ENCODE measurements at regions of chr22 and their contacts with region 1.

Region 1: GRCh38 chr22:36123673-36124630 is 36.6 kb downstream of the APOL3 start:
- DNase-seq: peak; percentile 87 to 94 (median 92)
- ATAC-seq: peak; percentile 100
- H3K4me3 ChIP-seq: peak overlapping the region; percentile 45
- H3K4me3 Mint-ChIP-seq: peak overlapping the region; percentile 68 to 89 (median 84)
- H3K27ac ChIP-seq: peak overlapping the region; percentile 63
- H3K27ac Mint-ChIP-seq: peak overlapping the region; percentile 87 to 96 (median 93)
- H3K4me1 ChIP-seq: no peaks in the 10 kb centered on the region
- H3K4me1 Mint-ChIP-seq: peaks cover 8 to 13% (median 11%) of the 10 kb centered on the region in 7 donors
- H3K27me3 ChIP-seq: no peaks in the 10 kb centered on the region
- H3K27me3 Mint-ChIP-seq: peaks cover 0 to 10% (median 0%) of the 10 kb centered on the region in 5 donors

Region 2: DNA sequence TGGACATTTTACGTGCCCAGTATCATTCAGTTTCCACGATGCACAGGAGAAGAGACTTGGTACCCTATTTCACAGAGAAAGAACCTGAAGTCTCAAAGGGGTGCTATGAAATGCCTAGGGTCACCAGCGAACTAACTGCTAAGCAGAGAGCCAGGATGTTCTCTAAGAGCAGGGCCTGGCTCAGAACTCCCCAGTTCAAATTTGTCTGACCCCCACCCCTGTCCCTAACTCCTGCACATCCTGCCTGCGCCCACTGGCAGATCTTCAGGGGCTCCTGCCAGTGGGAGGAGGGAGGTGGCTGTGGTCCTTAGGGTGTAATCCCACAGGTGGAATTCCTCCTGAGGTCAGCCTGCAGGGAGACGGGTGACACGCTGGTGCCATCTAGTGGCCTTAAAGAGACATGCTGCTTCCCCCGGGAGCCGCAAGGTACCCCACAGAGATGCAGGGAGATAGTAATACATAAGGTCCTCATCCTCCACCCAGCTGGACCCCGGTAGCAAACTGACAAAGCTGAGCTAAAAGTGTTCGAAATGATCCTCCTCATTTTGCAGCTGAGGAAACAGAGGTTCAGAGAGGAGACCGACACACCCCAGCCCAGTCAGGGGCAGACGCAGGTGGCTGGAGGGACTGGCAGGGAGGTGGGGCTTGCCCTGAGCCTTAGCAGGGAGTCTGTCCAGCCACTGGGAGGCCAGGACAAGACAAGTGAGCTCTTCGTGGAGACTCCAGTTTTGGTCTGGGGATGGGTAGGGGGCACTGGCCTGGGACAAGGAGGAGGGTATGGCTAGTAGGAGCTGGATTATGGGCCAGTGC is 540.9 kb before region 1 on chr22:
- CTCF ChIA-PET with region 1: no interaction called
- POLR2A ChIA-PET with region 1: no interaction called
- intact Hi-C with region 1: loop called in 1 of 2 experiments (anchors 2 kb)
- DNase-seq: peak; percentile 22 to 70 (median 40)
- ATAC-seq: peak; percentile 82
- H3K4me3 ChIP-seq: no peak overlapping the region
- H3K4me3 Mint-ChIP-seq: no peak overlapping the region
- H3K27ac ChIP-seq: no peak overlapping the region
- H3K27ac Mint-ChIP-seq: no peak overlapping the region
- H3K4me1 ChIP-seq: no peaks in the 10 kb centered on the region
- H3K4me1 Mint-ChIP-seq: peaks cover 0 to 6% (median 0%) of the 10 kb centered on the region in 7 donors
- H3K27me3 ChIP-seq: no peaks in the 10 kb centered on the region
- H3K27me3 Mint-ChIP-seq: peaks cover 0 to 7% (median 0%) of the 10 kb centered on the region in 5 donors

Region 3: GRCh38 chr22:35627264-35628041 is 496.5 kb before region 1 on chr22:
- CTCF ChIA-PET with region 1: interaction called, 9 read pairs
- POLR2A ChIA-PET with region 1: no interaction called
- intact Hi-C with region 1: loop called (anchors 1 kb)
- DNase-seq: peak in 5 of 9 donors; percentile 14 to 49 (median 34)
- ATAC-seq: peak; percentile 42
- H3K4me3 ChIP-seq: peak overlapping the region; percentile 55
- H3K4me3 Mint-ChIP-seq: peak overlapping the region; percentile 53 to 86 (median 73)
- H3K27ac ChIP-seq: no peak overlapping the region
- H3K27ac Mint-ChIP-seq: peak overlapping the region in 7 of 9 donors; percentile 28 to 93 (median 64)
- H3K4me1 ChIP-seq: peaks cover 0 to 10% of the 10 kb centered on the region in 2 donors
- H3K4me1 Mint-ChIP-seq: peaks cover 8 to 30% (median 28%) of the 10 kb centered on the region in 7 donors
- H3K27me3 ChIP-seq: no peaks in the 10 kb centered on the region
- H3K27me3 Mint-ChIP-seq: peaks cover 0 to 14% (median 8%) of the 10 kb centered on the region in 5 donors

Region 4: GRCh38 chr22:35921777-35922176 is 202.2 kb before region 1 on chr22:
- CTCF ChIA-PET with region 1: no interaction called
- POLR2A ChIA-PET with region 1: no interaction called
- intact Hi-C with region 1: loop called (anchors 5 kb)
- DNase-seq: peak in 6 of 9 donors; percentile 21 to 36 (median 30)
- ATAC-seq: peak; percentile 49
- H3K4me3 ChIP-seq: no peak overlapping the region
- H3K4me3 Mint-ChIP-seq: no peak overlapping the region
- H3K27ac ChIP-seq: no peak overlapping the region
- H3K27ac Mint-ChIP-seq: peak overlapping the region in 1 of 9 donors; percentile 4
- H3K4me1 ChIP-seq: no peaks in the 10 kb centered on the region
- H3K4me1 Mint-ChIP-seq: peaks cover 0 to 5% (median 0%) of the 10 kb centered on the region in 7 donors
- H3K27me3 ChIP-seq: no peaks in the 10 kb centered on the region
- H3K27me3 Mint-ChIP-seq: peaks cover 0 to 4% (median 0%) of the 10 kb centered on the region in 5 donors

Region 5: DNA sequence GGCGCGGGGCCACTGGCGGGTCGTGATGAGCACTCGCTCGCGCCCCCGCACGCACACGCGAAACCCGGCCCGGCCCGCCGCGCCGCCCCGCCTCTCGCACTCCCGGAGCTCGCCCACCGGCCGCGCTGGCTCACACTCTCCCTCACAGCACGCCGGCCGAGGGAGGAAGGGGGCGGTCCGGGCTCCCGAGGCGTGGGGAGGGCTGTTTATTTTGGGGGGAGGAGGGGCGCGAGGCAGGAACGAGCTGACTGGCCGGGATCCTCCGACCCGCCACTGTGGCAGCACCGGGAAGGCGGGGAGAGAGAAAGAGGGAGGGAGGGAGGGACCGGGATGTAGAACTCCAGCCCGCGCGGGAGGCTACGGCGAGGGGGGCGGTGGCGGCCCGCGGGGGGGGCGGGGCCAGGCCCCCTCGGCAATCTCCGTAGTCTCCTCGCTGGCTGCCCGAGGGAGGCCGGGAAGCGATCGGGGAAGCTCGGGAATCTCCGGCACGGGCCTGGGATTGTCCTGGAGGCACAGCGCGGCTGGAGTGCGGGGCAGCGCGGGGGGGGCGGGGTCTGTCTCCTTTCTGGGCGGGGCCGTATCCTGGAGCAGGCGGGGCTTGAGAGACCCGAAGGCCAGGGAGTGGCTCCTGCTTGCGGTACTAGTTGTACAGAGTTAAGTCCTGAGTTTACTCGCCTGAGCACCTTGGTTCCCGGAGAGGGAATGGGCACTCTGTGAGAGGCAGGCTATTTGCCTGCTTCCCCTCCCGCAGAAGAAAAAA is 95.1 kb before region 1 on chr22 and contains the start of gene RBFOX2:
- CTCF ChIA-PET with region 1: no interaction called
- POLR2A ChIA-PET with region 1: no interaction called
- intact Hi-C with region 1: loop called in 1 of 2 experiments (anchors 2 kb)
- DNase-seq: peak; percentile 26 to 82 (median 44)
- ATAC-seq: peak; percentile 80
- H3K4me3 ChIP-seq: peak within 1 kb of the TSS; percentile 61
- H3K4me3 Mint-ChIP-seq: peak within 1 kb of the TSS; percentile 85 to 96 (median 90)
- H3K27ac ChIP-seq: peak within 1 kb of the TSS; percentile 51
- H3K27ac Mint-ChIP-seq: peak within 1 kb of the TSS in 8 of 9 donors; percentile 40 to 86 (median 75)
- H3K4me1 ChIP-seq: peaks cover 8 to 13% of the 10 kb centered on the region in 2 donors
- H3K4me1 Mint-ChIP-seq: peaks cover 15 to 25% (median 23%) of the 10 kb centered on the region in 7 donors
- H3K27me3 ChIP-seq: no peaks in the 10 kb centered on the region
- H3K27me3 Mint-ChIP-seq: peaks cover 0 to 54% (median 4%) of the 10 kb centered on the region in 5 donors
- total RNA-seq, gene RBFOX2: 0.45 to 1.7 (median 1.2) TPM

Region 6: DNA sequence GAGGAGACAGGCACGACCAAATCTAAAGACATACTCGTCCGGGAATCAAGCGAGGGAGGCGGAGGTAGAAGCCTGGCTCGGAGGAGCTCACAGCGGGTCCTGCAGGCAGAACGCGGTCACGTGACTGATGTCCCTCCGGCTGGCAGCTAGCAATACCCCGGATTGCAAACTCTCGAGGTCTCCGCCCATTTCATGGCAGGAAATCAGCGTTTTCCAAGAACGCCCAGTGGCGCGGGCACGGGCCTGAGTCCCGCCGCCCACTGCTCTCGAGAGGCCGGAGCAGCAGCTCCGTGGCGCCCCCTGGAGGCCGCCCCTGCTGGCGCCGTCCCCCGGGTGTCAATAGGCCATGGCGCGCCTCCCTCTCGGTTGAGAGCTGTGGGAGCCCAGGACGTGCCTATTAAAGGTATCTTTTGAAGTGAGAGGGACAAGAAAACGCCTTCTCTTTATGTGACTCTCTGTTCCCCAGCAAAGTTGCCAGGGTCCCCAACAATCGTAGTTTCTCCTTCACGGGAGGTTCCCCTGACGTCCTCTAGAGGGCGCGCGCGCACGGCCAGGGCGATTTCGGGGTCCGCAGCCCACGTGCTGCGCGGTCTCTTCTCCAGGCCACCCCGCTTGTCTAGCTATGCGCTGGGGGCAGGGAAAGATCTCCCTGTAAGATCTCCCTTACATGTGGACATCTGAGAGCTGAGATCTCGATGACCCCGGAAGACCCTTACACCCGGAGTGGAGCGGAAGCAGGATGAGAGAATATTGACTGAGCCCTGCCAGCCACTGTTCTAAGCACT is 58.0 kb before region 1 on chr22:
- CTCF ChIA-PET with region 1: interaction called, 10 read pairs
- POLR2A ChIA-PET with region 1: no interaction called
- intact Hi-C with region 1: loop called (anchors 1 kb)
- DNase-seq: peak; percentile 35 to 80 (median 56)
- ATAC-seq: peak; percentile 88
- H3K4me3 ChIP-seq: peak overlapping the region; percentile 72
- H3K4me3 Mint-ChIP-seq: peak overlapping the region; percentile 80 to 92 (median 87)
- H3K27ac ChIP-seq: peak overlapping the region; percentile 21
- H3K27ac Mint-ChIP-seq: peak overlapping the region in 7 of 9 donors; percentile 14 to 89 (median 58)
- H3K4me1 ChIP-seq: peaks cover 6 to 8% of the 10 kb centered on the region in 2 donors
- H3K4me1 Mint-ChIP-seq: peaks cover 4 to 10% (median 8%) of the 10 kb centered on the region in 7 donors
- H3K27me3 ChIP-seq: no peaks in the 10 kb centered on the region
- H3K27me3 Mint-ChIP-seq: peaks cover 0 to 11% (median 0%) of the 10 kb centered on the region in 5 donors

Region 7: GRCh38 chr22:36180038-36180880 is 56.3 kb after region 1 on chr22:
- CTCF ChIA-PET with region 1: interaction called, 4 read pairs
- POLR2A ChIA-PET with region 1: no interaction called
- intact Hi-C with region 1: loop called in 1 of 2 experiments (anchors 1 kb)
- DNase-seq: peak; percentile 63 to 85 (median 76)
- ATAC-seq: peak; percentile 99
- H3K4me3 ChIP-seq: no peak overlapping the region
- H3K4me3 Mint-ChIP-seq: no peak overlapping the region
- H3K27ac ChIP-seq: no peak overlapping the region
- H3K27ac Mint-ChIP-seq: peak overlapping the region in 1 of 9 donors; percentile 45
- H3K4me1 ChIP-seq: peaks cover 0 to 2% of the 10 kb centered on the region in 2 donors
- H3K4me1 Mint-ChIP-seq: peaks cover 0 to 4% (median 3%) of the 10 kb centered on the region in 7 donors
- H3K27me3 ChIP-seq: no peaks in the 10 kb centered on the region
- H3K27me3 Mint-ChIP-seq: peaks cover 0 to 20% (median 0%) of the 10 kb centered on the region in 5 donors

Region 8: DNA sequence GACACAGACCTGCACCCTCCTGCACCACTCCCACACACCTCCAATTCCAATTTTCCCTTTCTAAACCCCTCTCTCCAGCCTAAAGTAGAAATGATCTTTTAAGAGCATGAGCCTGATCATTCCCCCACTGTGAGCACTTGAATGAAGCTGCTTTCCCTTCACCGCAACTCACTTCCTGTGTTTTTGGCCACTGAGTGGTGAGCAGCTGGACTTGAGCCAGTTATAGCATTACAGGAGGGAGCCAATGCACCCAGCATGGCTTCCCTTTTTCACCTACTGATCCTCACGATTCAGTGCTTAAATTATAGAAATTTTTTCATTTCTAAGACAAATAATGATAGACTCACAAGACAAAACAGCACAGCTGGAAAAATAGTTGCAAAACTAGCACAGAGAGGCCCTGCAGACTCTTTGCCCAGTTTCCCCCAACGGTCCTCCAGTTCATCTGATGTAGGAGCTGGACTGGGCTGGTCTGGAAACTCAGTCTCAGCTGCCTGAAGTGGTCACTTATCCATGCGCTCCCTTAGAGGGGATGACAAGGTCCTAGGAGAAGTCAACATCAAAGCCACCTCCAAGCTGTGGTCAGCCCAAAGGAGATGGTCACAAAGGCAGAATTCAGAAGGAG is 87.4 kb after region 1 on chr22:
- CTCF ChIA-PET with region 1: no interaction called
- POLR2A ChIA-PET with region 1: no interaction called
- intact Hi-C with region 1: no loop called
- DNase-seq: no peak
- ATAC-seq: peak; percentile 32
- H3K4me3 ChIP-seq: no peak overlapping the region
- H3K4me3 Mint-ChIP-seq: no peak overlapping the region
- H3K27ac ChIP-seq: no peak overlapping the region
- H3K27ac Mint-ChIP-seq: no peak overlapping the region
- H3K4me1 ChIP-seq: no peaks in the 10 kb centered on the region
- H3K4me1 Mint-ChIP-seq: peaks cover 5 to 16% (median 8%) of the 10 kb centered on the region in 7 donors
- H3K27me3 ChIP-seq: no peaks in the 10 kb centered on the region
- H3K27me3 Mint-ChIP-seq: peaks cover 5 to 70% (median 31%) of the 10 kb centered on the region in 5 donors

Measured in naive thymus-derived CD4-positive, alpha-beta T cell (primary cell).